Activated T-helper 2 cell treated with anti-CD3 and anti-CD28 coated beads, Interferon-gamma antibody, Interleukin-2, Interleukin-4, amounts not matched to agents 10 μg/mL and 5 μg/mL and 100 μg/mL, durations not matched to agents 14 hours and 24 hours and 36 hours (primary cell): ENCODE measurements at regions of chr5 and their contacts with region 1.

Region 1: GRCh38 chr5:109409844-109410388 is at the start of gene PJA2:
- DNase-seq: peak; percentile 96
- H3K4me3 Mint-ChIP-seq: peak within 1 kb of the TSS; percentile 95
- H3K27ac Mint-ChIP-seq: peak within 1 kb of the TSS; percentile 98
- H3K4me1 Mint-ChIP-seq: peaks cover 41% of the 10 kb centered on the region
- H3K27me3 Mint-ChIP-seq: no peaks in the 10 kb centered on the region
- total RNA-seq, gene PJA2: 52.2 and 52.9 TPM in 2 replicates

Region 2: DNA sequence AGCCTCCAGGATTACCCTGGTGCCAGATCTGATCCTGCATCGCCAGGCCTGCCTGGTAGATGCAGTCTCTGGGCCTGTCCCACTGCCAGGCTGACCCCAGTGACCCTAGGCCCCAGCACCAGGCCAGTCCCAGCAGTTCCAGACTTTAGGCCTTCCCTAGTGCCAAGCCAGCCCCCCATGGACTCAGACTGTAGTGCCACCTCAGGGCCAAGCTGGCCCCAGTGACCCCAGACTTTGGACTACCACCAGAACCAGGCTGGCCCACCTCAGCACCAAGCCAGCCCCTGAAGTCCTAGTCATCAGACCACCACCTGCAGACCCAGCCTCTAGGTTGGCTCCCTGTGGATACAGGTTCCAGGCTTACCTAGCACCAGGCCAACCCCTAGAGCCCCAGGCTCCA is 142.6 kb before region 1 on chr5:
- intact Hi-C with region 1: no loop called
- DNase-seq: no peak
- H3K4me3 Mint-ChIP-seq: no peak overlapping the region
- H3K27ac Mint-ChIP-seq: no peak overlapping the region
- H3K4me1 Mint-ChIP-seq: no peaks in the 10 kb centered on the region
- H3K27me3 Mint-ChIP-seq: no peaks in the 10 kb centered on the region

Region 3: GRCh38 chr5:109354761-109355160 is 55.2 kb before region 1 on chr5:
- intact Hi-C with region 1: loop called (anchors 2 kb)
- DNase-seq: no peak
- H3K4me3 Mint-ChIP-seq: no peak overlapping the region
- H3K27ac Mint-ChIP-seq: no peak overlapping the region
- H3K4me1 Mint-ChIP-seq: no peaks in the 10 kb centered on the region
- H3K27me3 Mint-ChIP-seq: no peaks in the 10 kb centered on the region

Region 4: GRCh38 chr5:109374625-109375024 is 35.3 kb before region 1 on chr5:
- intact Hi-C with region 1: loop called (anchors 5 kb)
- DNase-seq: no peak
- H3K4me3 Mint-ChIP-seq: no peak overlapping the region
- H3K27ac Mint-ChIP-seq: no peak overlapping the region
- H3K4me1 Mint-ChIP-seq: peaks cover 8% of the 10 kb centered on the region
- H3K27me3 Mint-ChIP-seq: no peaks in the 10 kb centered on the region

Region 5: GRCh38 chr5:109455598-109456096 is 45.7 kb after region 1 on chr5:
- intact Hi-C with region 1: loop called (anchors 5 kb)
- DNase-seq: no peak
- H3K4me3 Mint-ChIP-seq: no peak overlapping the region
- H3K27ac Mint-ChIP-seq: peak overlapping the region; percentile 40
- H3K4me1 Mint-ChIP-seq: peaks cover 10% of the 10 kb centered on the region
- H3K27me3 Mint-ChIP-seq: no peaks in the 10 kb centered on the region